Panc1 (cell line): ENCODE measurements at regions of chr18 and their contacts with region 1.

Region 1: DNA sequence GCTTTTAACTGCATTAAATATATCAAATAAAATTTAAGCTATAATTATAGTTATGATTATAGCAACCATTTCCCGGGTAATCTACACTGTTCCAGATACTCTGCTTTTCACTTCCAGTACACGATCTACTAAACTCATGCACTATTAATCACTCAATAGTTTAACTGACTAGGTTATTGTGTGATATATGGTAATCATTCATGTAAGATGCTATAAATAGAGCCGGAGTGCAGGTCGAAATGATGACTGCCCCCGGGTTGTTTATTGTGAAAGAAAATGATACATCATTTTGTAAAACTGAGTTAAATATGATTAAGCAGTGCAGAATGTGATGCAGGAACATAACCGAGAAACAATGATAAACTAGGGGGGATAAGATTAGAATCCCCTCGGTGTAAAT is 434.6 kb upstream of the DSEL start:
- DNase-seq: no peak
- ATAC-seq: no peak
- H3K4me3 ChIP-seq: no peak overlapping the region
- H3K27ac ChIP-seq: no peak overlapping the region
- H3K4me1 ChIP-seq: no peaks in the 10 kb centered on the region
- H3K27me3 ChIP-seq: no peaks in the 10 kb centered on the region
- CTCF ChIP-seq: no peak

Region 2: GRCh38 chr18:67525328-67526099 is 425.6 kb before region 1 on chr18:
- CTCF ChIA-PET with region 1: interaction called, 15 read pairs
- POLR2A ChIA-PET with region 1: no interaction called
- in situ Hi-C with region 1: no loop called
- intact Hi-C with region 1: no loop called
- DNase-seq: peak; percentile 55
- ATAC-seq: peak; percentile 90
- H3K4me3 ChIP-seq: no peak overlapping the region
- H3K27ac ChIP-seq: peak overlapping the region; percentile 63; the same call in 1 of the 2 replicates
- H3K4me1 ChIP-seq: peaks cover 4% of the 10 kb centered on the region; the same call in 1 of the 2 replicates
- H3K27me3 ChIP-seq: no peaks in the 10 kb centered on the region
- CTCF ChIP-seq: no peak